Heart left ventricle (tissue), 16 donors: ENCODE measurements at regions of chr2 and their contacts with region 1.

Region 1: DNA sequence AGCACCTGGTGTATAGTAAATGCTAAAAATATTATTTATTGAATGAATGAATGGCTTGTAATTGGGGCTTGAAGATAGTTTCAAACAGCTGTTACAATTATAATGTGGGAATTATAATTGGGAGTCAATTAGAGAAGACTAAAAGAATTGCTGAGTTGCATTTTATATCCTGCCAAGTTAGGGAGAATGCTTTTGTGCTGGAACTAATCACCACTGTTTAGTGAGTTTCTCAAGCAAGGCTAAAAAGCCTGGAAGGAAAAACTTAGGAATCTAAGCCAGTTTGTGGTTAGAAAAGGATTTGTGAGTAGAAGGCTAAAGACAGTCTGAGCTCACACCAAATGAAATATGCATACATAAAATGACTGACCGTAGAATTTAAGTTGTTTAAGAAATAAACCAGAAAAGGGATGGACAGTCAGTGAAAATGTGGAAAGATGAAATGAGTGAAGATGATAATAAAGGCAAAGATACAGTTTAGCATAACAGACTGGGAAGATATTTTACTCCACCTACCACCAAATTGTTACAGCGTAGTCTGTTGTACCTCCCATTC is 647.7 kb upstream of the FSHR start:
- DNase-seq: no peak
- ATAC-seq: no peak
- H3K4me3 ChIP-seq: no peak overlapping the region
- H3K27ac ChIP-seq: no peak overlapping the region
- H3K4me1 ChIP-seq: no peaks in the 10 kb centered on the region
- H3K27me3 ChIP-seq: no peaks in the 10 kb centered on the region
- CTCF ChIP-seq: no peak
- POLR2A ChIP-seq: no peak

Region 2: GRCh38 chr2:49831698-49832367 is 29.9 kb after region 1 on chr2:
- intact Hi-C with region 1: no loop called
- DNase-seq: no peak
- ATAC-seq: no peak
- H3K4me3 ChIP-seq: no peak overlapping the region
- H3K27ac ChIP-seq: peak overlapping the region in 4 of 12 donors; percentile 1 to 51 (median 34)
- H3K4me1 ChIP-seq: peaks cover 0 to 4% (median 0%) of the 10 kb centered on the region in 12 donors
- H3K27me3 ChIP-seq: no peaks in the 10 kb centered on the region
- CTCF ChIP-seq: no peak
- POLR2A ChIP-seq: no peak

Region 3: DNA sequence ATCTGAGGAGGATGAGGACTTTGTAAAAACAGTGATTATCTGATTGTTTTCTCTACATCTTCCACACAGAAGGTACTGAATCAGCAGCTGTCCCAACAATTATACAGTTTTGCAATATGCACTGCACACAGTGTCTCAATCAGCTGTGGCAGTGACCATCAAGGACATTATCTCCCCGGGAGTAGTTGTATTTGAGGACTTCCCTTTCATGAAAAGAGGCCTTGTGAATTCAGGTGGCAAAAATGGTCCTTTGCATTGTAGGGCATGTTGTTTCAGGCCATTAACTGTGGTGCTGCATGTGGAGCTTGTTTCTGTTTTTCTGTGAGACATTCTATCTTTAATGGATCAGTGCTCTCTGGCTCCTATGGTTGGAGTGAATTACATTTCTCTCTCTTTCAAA is 131.7 kb after region 1 on chr2:
- intact Hi-C with region 1: loop called in 1 of 10 experiments (anchors 10 kb)
- DNase-seq: no peak
- ATAC-seq: peak in 2 of 4 donors; percentile 22 to 41
- H3K4me3 ChIP-seq: no peak overlapping the region
- H3K27ac ChIP-seq: no peak overlapping the region
- H3K4me1 ChIP-seq: peaks cover 0 to 4% (median 0%) of the 10 kb centered on the region in 12 donors
- H3K27me3 ChIP-seq: no peaks in the 10 kb centered on the region
- CTCF ChIP-seq: no peak
- POLR2A ChIP-seq: no peak